ENCODE measurements at regions of chr18 and their contacts with region 1.

Region 1: GRCh38 chr18:58314284-58314683 is 270.3 kb downstream of the NEDD4L start:
- DNase-seq: peak; percentile 36
- H3K4me3 ChIP-seq: no peak overlapping the region
- H3K27ac ChIP-seq: peak overlapping the region; percentile 79
- H3K4me1 ChIP-seq: peaks cover 33% of the 10 kb centered on the region
- H3K27me3 ChIP-seq: no peaks in the 10 kb centered on the region
- CTCF ChIP-seq: no peak
- POLR2A ChIP-seq: no peak

Region 2: GRCh38 chr18:58239879-58240278 is 74.4 kb before region 1 on chr18:
- CTCF ChIA-PET with region 1: interaction called, 4 read pairs
- POLR2A ChIA-PET with region 1: no interaction called
- dilution Hi-C with region 1: no loop called
- intact Hi-C with region 1: loop called (anchors 1 kb)
- DNase-seq: peak; percentile 42
- H3K4me3 ChIP-seq: no peak overlapping the region
- H3K27ac ChIP-seq: peak overlapping the region; percentile 71
- H3K4me1 ChIP-seq: peaks cover 27% of the 10 kb centered on the region
- H3K27me3 ChIP-seq: no peaks in the 10 kb centered on the region
- CTCF ChIP-seq: no peak
- POLR2A ChIP-seq: no peak

Region 3: GRCh38 chr18:58247363-58247834 is 66.9 kb before region 1 on chr18:
- CTCF ChIA-PET with region 1: interaction called, 4 read pairs
- POLR2A ChIA-PET with region 1: no interaction called
- dilution Hi-C with region 1: no loop called
- intact Hi-C with region 1: loop called (anchors 2 kb)
- DNase-seq: peak; percentile 83
- H3K4me3 ChIP-seq: peak overlapping the region in 2 of 3 experiments; percentile 4 to 20
- H3K27ac ChIP-seq: peak overlapping the region; percentile 64
- H3K4me1 ChIP-seq: peaks cover 29% of the 10 kb centered on the region
- H3K27me3 ChIP-seq: no peaks in the 10 kb centered on the region
- CTCF ChIP-seq: no peak
- POLR2A ChIP-seq: no peak

Region 4: GRCh38 chr18:58263055-58263957 is 51.0 kb before region 1 on chr18:
- CTCF ChIA-PET with region 1: no interaction called
- POLR2A ChIA-PET with region 1: no interaction called
- dilution Hi-C with region 1: no loop called
- intact Hi-C with region 1: loop called (anchors 1 kb)
- DNase-seq: peak; percentile 86
- H3K4me3 ChIP-seq: peak overlapping the region in 2 of 3 experiments; percentile 7 to 50
- H3K27ac ChIP-seq: peak overlapping the region; percentile 88
- H3K4me1 ChIP-seq: peaks cover 22% of the 10 kb centered on the region
- H3K27me3 ChIP-seq: no peaks in the 10 kb centered on the region
- CTCF ChIP-seq: no peak
- POLR2A ChIP-seq: no peak

Region 5: DNA sequence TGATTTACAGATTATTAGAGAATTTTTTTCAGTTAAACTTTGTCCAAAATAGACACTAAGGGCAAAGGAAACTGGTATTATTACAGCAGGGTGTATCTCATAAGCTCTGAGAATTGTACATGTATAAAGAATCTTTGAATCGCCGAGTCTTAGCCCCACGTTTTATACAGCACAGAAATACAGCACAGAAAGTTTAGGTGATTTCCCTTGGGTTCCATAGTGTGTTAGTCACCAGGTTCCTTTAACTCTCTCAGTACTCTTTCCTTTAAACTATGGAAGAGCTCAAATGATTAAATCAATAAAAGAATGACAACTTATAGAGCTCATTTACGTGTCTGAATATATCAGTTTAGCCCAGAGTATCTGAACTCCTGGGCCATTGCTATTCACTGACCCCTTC is 13.4 kb before region 1 on chr18:
- CTCF ChIA-PET with region 1: interaction called, 7 read pairs
- POLR2A ChIA-PET with region 1: no interaction called
- dilution Hi-C with region 1: no loop called
- intact Hi-C with region 1: loop called (anchors 1 kb)
- DNase-seq: no peak
- H3K4me3 ChIP-seq: no peak overlapping the region
- H3K27ac ChIP-seq: no peak overlapping the region
- H3K4me1 ChIP-seq: no peaks in the 10 kb centered on the region
- H3K27me3 ChIP-seq: no peaks in the 10 kb centered on the region
- CTCF ChIP-seq: no peak
- POLR2A ChIP-seq: no peak

Region 6: DNA sequence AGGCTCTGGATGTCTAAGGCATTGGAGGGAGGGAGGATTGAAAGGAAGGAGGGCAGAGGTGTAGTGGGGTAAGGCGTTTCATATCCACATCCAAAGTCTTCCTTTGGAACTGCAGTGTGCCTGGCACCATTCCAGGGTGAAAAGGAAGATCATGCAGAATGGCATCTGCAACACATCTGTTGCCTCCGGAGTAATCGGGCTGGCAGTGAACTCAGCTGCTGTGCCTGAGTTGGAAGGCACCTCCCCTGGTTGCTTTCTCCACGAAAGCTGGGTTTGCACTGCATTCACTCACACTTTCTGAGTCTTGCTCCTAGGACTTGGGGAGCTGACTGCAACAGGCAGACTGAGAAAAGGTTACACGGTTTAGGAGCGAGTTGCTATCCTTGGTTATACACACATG is 795.1 kb after region 1 on chr18:
- CTCF ChIA-PET with region 1: no interaction called
- POLR2A ChIA-PET with region 1: no interaction called
- dilution Hi-C with region 1: no loop called
- intact Hi-C with region 1: no loop called
- DNase-seq: no peak
- H3K4me3 ChIP-seq: no peak overlapping the region
- H3K27ac ChIP-seq: no peak overlapping the region
- H3K4me1 ChIP-seq: no peaks in the 10 kb centered on the region
- H3K27me3 ChIP-seq: peaks cover 7 to 11% of the 10 kb centered on the region in 2 experiments
- CTCF ChIP-seq: no peak
- POLR2A ChIP-seq: no peak